ENCODE measurements at regions of chr15 and their contacts with region 1.

Region 1: GRCh38 chr15:85646538-85647091 is 148.1 kb downstream of the KLHL25 start:
- DNase-seq: no peak
- ATAC-seq: no peak
- H3K4me3 ChIP-seq: no peak overlapping the region
- H3K27ac ChIP-seq: no peak overlapping the region
- H3K4me1 ChIP-seq: peaks cover 14% of the 10 kb centered on the region; the same call in 2 of the 3 replicates
- CTCF ChIP-seq: no peak
- EP300 ChIP-seq: no peak
- POLR2A ChIP-seq: no peak
- RAD21 ChIP-seq: no peak

Region 2: GRCh38 chr15:85456798-85457197 is 189.8 kb before region 1 on chr15:
- CTCF ChIA-PET with region 1: no interaction called
- POLR2A ChIA-PET with region 1: no interaction called
- DNase-seq: no peak
- ATAC-seq: no peak
- H3K4me3 ChIP-seq: no peak overlapping the region
- H3K27ac ChIP-seq: no peak overlapping the region
- H3K4me1 ChIP-seq: peaks cover 66% of the 10 kb centered on the region
- CTCF ChIP-seq: no peak
- EP300 ChIP-seq: no peak
- POLR2A ChIP-seq: no peak
- RAD21 ChIP-seq: no peak

Region 3: GRCh38 chr15:85658816-85659215 is 12.2 kb after region 1 on chr15:
- CTCF ChIA-PET with region 1: interaction called, 14 read pairs
- POLR2A ChIA-PET with region 1: no interaction called
- DNase-seq: no peak
- ATAC-seq: no peak
- H3K4me3 ChIP-seq: no peak overlapping the region
- H3K27ac ChIP-seq: no peak overlapping the region
- H3K4me1 ChIP-seq: no peaks in the 10 kb centered on the region
- CTCF ChIP-seq: no peak
- EP300 ChIP-seq: no peak
- POLR2A ChIP-seq: no peak
- RAD21 ChIP-seq: no peak

Measured in A549 (cell line).